ENCODE measurements at regions of chr12 and their contacts with region 1.

Region 1: GRCh38 chr12:124026755-124027745 is 54.0 kb downstream of the ZNF664 start:
- DNase-seq: peak; percentile 71

Region 2: GRCh38 chr12:123655420-123655819 is 371.6 kb before region 1 on chr12:
- in situ Hi-C with region 1: no loop called
- DNase-seq: no peak

Region 3: GRCh38 chr12:124422570-124423523 is 395.8 kb after region 1 on chr12:
- in situ Hi-C with region 1: no loop called
- DNase-seq: no peak

Region 4: GRCh38 chr12:124767066-124767821 is 740.2 kb after region 1 on chr12:
- in situ Hi-C with region 1: loop called (anchors 10 kb)
- DNase-seq: peak; percentile 85